ENCODE measurements at regions of chr3 and their contacts with region 1.

Region 1: GRCh38 chr3:33883538-33883950 is 85.1 kb downstream of the PDCD6IP start:
- DNase-seq: peak in 11 of 42 donors; percentile 10 to 73 (median 43)

Region 2: GRCh38 chr3:34305266-34305665 is 421.7 kb after region 1 on chr3:
- intact Hi-C with region 1: no loop called
- DNase-seq: no peak

Region 3: GRCh38 chr3:34683851-34684250 is 800.3 kb after region 1 on chr3:
- intact Hi-C with region 1: loop called (anchors 10 kb)
- DNase-seq: peak in 41 of 42 donors; percentile 12 to 87 (median 60)